ENCODE measurements at regions of chr1 and their contacts with region 1.

Region 1: DNA sequence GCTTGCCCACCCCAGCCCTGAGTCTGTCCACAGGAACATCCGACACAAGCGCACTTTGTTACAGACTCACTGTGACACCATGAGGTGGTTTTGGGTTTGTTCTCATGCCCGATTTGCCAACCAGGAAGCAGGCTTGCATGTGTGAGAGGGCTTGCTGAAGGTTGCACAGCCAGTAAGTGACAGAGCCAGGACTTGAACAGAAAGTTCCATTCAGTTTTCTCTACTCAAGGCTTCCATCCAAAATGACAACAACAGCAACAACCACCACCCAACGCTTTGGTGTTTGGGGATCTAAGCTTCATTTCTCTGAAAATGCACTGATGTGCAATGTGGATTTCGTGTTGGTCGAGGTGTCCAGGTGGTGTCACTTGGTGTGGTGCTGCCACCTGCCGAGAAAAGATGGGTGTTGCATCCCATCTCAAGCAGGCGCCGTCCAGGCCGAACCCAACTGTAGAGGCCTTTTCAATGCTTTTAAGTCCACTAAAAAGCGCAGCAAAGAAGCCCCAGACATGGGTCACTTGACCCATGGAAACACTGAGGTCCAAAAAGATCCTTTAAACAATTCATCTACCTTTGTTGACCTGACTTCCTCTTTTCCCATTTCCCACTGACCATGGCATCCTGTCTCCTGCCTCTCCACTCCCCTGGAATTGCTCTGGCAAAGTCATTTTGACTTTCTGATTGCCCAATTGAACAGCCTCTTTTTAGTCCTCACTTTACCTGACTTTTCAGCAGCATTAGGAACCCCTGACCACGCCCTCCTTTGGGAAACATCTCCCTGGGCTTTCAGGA is 12.2 kb downstream of the CITED4 start:
- ATAC-seq: peak; percentile 59 to 86 (median 74)
- H3K4me3 ChIP-seq: no peak overlapping the region
- H3K27ac ChIP-seq: no peak overlapping the region
- H3K4me1 ChIP-seq: peaks cover 11 to 18% of the 10 kb centered on the region in 2 donors

Region 2: GRCh38 chr1:40799351-40799867 is 50.6 kb before region 1 on chr1:
- in situ Hi-C with region 1: loop called in 1 of 9 experiments (anchors 10 kb)
- ATAC-seq: peak in 4 of 8 experiments; percentile 15 to 68 (median 34)
- H3K4me3 ChIP-seq: no peak overlapping the region
- H3K27ac ChIP-seq: no peak overlapping the region
- H3K4me1 ChIP-seq: peaks cover 6 to 40% of the 10 kb centered on the region in 2 donors

Region 3: DNA sequence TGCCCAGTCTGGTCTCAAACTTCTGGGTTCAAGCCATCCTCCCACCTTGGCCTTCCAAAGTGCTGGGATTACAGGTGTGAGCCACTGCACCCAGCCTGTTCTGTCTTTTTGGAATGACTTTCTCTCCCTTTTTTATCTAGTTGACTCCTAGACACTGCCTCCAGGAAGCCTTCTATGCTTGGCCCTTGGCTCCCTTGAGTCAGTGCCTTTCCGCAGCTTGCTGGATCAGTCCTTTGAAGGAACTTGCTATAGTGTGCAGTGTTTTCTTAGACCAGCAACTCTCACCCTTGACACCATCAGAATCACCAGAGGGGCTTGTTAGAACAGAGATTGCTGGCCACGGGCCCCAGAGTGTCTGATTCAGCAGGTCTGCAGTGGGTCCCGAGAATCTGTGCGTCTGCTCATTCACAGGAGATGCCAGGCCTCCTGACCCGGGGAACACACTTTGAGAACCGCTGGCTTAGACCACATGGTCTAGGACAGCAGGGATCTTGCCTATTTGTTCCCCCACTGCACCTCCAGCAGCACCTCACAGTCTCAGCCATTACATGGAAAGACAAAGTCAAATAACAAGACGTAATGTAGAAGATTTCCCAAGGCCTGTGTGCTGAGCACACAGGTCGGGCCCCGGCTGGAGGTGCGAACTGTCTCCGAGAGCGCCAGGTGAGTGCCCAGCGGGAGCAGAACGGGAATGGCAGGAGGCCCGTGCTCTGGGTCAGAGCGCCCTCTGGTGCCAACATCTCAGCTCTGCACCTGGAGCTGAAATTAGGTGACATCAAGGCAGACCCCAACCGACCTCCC is 102.1 kb after region 1 on chr1:
- in situ Hi-C with region 1: loop called in 4 of 9 experiments (anchors 5 to 10 kb)
- ATAC-seq: peak; percentile 17 to 86 (median 81)
- H3K4me3 ChIP-seq: no peak overlapping the region
- H3K27ac ChIP-seq: no peak overlapping the region
- H3K4me1 ChIP-seq: no peaks in the 10 kb centered on the region

Region 4: DNA sequence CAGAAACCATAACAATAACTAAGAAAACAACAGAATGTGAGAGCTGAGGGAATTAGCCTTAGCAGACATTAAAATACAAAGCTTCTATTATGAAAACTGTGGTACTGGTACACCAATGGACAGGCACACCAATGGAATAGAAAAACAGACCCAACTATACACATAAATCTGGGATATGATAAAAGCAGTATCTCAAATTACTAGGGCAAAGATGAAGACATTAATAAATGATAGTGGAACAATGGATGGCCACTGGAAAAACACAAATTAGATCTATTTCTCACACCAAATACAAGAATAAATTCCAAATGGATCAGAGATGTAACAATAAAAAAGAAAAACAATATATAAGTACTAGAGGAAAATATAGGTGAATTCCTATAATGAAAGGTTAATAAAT is 236.9 kb after region 1 on chr1:
- in situ Hi-C with region 1: no loop called
- ATAC-seq: no peak
- H3K4me3 ChIP-seq: no peak overlapping the region
- H3K27ac ChIP-seq: no peak overlapping the region
- H3K4me1 ChIP-seq: no peaks in the 10 kb centered on the region